Left colon (tissue), 2 donors: ENCODE measurements at regions of chr3 and their contacts with region 1.

Region 1: GRCh38 chr3:194682694-194683310 is 2.9 kb upstream of the FAM43A start:
- DNase-seq: peak; percentile 72 to 74
- ATAC-seq: peak; percentile 59

Region 2: DNA sequence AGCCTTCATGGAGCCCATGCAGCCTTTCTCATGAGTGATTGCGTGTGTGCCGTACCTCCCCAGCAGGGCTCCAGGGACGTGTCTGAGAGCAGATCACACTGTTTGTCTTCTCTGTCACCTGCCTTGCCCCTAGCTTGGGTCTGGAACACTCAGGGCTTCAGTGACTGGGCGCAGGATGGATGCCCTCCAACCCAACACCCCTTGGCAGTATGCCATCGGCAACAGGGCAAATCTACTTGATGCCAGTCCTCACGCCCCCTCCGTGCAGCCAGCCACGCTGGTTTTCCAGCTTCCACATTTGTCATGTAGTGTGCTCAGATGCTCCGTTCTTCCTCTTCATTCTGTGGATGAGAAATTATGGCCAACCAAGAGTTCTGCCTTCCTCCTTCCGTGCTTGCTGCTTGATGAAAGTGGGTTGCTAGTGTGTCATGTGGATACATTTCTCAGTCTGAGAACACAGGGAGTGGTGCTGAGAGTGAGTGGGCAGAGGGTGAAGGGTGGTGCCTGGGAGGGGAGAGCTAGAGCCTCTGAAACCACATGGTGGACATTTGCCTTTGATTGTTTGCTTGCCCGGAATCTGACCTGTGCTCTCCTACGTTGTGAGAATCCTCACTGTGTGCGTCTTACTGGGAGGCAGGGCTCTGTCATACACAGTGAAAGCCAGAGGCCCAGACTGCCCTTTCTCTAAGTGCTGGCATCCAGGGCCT is 100.0 kb after region 1 on chr3:
- intact Hi-C with region 1: no loop called
- DNase-seq: no peak
- ATAC-seq: no peak

Region 3: DNA sequence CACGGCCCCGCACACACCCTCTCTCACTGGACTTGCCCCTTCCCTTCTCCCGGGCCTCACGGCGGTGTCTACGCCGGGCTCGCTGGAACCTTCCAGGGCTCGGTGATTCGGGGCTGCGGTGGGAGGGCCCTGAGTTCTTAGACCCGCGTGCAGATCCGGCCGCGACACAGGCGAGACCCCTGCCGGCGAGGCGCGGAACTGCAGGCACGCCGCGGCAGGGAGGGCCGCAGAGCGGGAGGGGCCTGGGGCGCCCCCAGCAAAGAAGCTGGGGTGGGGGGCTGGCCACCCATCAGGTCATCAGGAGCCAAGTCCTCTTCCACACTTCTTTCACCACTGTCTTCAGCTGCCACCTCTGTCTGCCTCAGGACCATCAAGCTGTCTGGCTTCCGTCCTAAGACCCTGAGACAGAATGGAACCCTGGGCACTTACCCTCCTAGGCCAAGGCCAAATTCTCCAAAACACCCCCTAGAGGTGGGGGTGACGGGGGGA is 423.7 kb after region 1 on chr3:
- intact Hi-C with region 1: loop called (anchors 5 kb)
- DNase-seq: peak; percentile 51 to 68
- ATAC-seq: peak; percentile 49